Activated T-helper 2 cell treated with anti-CD3 and anti-CD28 coated beads, Interferon-gamma antibody, Interleukin-2, Interleukin-4, amounts not matched to agents 10 μg/mL and 5 μg/mL and 100 μg/mL, durations not matched to agents 14 hours and 24 hours and 36 hours (primary cell): ENCODE measurements at regions of chr15 and their contacts with region 1.

Region 1: GRCh38 chr15:63188926-63189871 is at the start of gene RAB8B:
- DNase-seq: peak; percentile 96
- H3K4me3 Mint-ChIP-seq: peak within 1 kb of the TSS; percentile 96
- H3K27ac Mint-ChIP-seq: peak within 1 kb of the TSS; percentile 90
- H3K4me1 Mint-ChIP-seq: peaks cover 40% of the 10 kb centered on the region
- H3K27me3 Mint-ChIP-seq: no peaks in the 10 kb centered on the region
- total RNA-seq, gene RAB8B: 214 TPM in 2 replicates

Region 2: DNA sequence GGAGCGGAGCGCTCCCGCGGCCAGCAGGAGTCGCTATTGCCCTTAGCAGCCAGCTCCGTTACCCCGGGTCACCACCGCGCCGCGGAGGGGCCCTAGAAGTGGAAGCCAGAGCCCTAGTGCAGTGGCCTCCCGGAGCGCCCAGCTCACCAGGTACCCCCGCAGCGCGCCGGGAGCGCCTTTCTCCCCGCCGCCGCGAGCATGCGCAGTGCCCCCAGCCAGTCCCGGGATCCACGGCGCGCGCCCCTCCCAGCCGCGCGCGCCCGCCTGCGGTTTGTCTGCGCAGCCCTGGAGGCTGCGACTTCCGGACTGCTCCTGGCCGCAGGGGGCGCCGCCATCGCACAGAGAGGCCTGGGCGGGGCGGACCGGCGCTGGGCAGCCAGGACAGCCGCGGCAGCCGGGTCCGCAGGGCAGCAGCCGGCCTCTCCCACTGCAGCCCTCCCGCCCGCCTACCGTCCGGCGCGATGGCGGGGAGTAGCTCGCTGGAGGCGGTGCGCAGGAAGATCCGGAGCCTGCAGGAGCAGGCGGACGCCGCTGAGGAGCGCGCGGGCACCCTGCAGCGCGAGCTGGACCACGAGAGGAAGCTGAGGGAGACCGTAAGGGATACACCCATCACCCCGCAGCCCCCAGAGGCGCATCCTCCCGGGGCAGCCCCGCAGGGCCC is 141.0 kb before region 1 on chr15:
- intact Hi-C with region 1: loop called (anchors 10 kb)
- DNase-seq: peak; percentile 81
- H3K4me3 Mint-ChIP-seq: peak overlapping the region; percentile 89
- H3K27ac Mint-ChIP-seq: no peak overlapping the region
- H3K4me1 Mint-ChIP-seq: peaks cover 11% of the 10 kb centered on the region
- H3K27me3 Mint-ChIP-seq: peaks cover 57% of the 10 kb centered on the region

Region 3: DNA sequence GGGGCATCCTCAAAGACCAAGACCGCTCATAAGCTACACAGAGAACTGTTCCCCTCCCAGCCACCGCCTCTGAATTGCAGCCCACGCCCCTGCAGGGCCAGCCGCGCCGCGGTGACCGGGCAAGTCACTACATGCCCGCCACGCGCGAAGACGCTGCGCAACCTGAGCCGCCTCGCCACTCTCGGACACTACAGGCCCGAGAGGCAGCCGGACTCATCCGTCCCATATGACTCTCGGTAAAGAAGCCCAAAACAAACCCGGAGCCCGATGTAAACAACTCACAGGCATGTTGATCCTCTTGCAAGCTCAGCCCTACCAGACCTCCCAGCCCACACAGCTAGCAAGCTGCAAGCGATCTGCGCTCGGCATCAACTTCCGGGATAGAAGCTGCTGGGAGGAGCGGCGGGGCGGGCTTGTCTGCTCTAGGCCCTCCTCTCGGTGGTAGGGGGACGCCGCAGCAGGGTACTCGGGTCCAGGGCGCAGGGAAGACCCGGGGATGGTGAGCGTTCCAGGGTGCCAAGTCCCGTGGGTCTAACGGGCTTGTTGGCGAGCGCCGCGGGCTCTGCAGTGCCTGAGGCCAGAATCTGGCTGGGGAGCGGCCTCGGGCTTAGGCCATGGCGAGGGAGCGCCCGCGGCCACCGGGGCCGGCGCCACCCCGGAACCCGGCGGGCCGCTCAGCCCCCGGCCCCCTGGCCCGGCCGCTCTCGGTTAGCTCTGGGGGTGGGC is 31.9 kb before region 1 on chr15 and contains the start of gene RPS27L:
- intact Hi-C with region 1: loop called (anchors 1 kb)
- DNase-seq: peak; percentile 87
- H3K4me3 Mint-ChIP-seq: peak within 1 kb of the TSS; percentile 97
- H3K27ac Mint-ChIP-seq: peak within 1 kb of the TSS; percentile 97
- H3K4me1 Mint-ChIP-seq: peaks cover 14% of the 10 kb centered on the region
- H3K27me3 Mint-ChIP-seq: no peaks in the 10 kb centered on the region
- total RNA-seq, gene RPS27L: 164 and 167 TPM in 2 replicates

Region 4: DNA sequence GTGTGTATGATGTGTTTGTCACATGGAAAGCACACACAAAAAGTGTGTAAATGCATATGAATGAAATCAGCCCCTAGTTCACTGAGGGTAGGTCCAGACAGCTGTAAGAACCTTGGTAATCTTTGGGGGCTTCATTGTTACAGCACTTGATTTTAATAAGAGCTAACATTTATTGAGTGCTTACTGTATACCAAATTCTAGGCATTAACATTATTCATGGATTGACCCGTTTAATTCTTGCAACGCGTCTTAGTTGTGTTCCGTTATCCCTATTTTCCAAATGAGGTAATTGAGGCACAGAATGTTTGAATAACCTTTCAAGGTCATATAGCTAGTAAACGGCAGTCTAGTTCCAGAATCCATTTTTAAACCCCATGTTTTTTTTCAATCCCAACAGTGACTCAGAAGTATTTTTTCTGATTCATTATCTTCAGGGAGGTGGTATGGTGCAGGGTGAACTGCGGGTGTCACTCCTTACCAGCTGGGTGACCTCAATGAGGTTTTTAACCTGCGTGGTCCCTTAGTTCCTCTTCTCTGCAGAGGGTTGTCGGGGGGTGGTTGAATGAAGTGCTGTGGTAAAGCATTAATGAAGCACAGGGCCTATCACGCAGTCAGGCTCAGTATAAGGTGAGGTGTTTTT is 14.4 kb after region 1 on chr15:
- intact Hi-C with region 1: loop called (anchors 1 kb)
- DNase-seq: no peak
- H3K4me3 Mint-ChIP-seq: no peak overlapping the region
- H3K27ac Mint-ChIP-seq: peak overlapping the region; percentile 71
- H3K4me1 Mint-ChIP-seq: peaks cover 83% of the 10 kb centered on the region
- H3K27me3 Mint-ChIP-seq: no peaks in the 10 kb centered on the region

Region 5: GRCh38 chr15:63218100-63218808 is 29.1 kb after region 1 on chr15:
- intact Hi-C with region 1: no loop called
- DNase-seq: no peak
- H3K4me3 Mint-ChIP-seq: no peak overlapping the region
- H3K27ac Mint-ChIP-seq: peak overlapping the region; percentile 67
- H3K4me1 Mint-ChIP-seq: peaks cover 62% of the 10 kb centered on the region
- H3K27me3 Mint-ChIP-seq: no peaks in the 10 kb centered on the region

Region 6: DNA sequence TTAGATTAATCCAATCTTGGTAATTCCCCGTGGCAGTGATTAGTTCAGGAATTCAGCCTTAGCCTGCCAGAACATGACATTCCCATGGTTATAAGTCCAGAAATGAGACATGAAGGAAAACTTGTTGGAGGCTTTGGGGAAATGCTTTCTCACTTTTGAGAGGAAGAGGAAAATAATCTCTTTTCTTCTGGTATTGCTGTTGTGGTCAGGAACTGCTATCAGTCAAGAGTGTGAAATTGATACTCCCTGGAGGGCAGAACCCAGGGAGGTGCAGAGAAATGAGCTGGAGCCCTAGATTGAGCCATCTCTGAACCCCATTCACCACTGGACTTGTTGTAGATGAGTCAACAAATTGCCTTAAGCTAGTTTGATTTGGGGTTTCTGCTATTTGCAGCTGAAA is 49.6 kb after region 1 on chr15:
- intact Hi-C with region 1: loop called (anchors 1 kb)
- DNase-seq: no peak
- H3K4me3 Mint-ChIP-seq: no peak overlapping the region
- H3K27ac Mint-ChIP-seq: peak overlapping the region; percentile 54
- H3K4me1 Mint-ChIP-seq: peaks cover 61% of the 10 kb centered on the region
- H3K27me3 Mint-ChIP-seq: no peaks in the 10 kb centered on the region

Region 7: DNA sequence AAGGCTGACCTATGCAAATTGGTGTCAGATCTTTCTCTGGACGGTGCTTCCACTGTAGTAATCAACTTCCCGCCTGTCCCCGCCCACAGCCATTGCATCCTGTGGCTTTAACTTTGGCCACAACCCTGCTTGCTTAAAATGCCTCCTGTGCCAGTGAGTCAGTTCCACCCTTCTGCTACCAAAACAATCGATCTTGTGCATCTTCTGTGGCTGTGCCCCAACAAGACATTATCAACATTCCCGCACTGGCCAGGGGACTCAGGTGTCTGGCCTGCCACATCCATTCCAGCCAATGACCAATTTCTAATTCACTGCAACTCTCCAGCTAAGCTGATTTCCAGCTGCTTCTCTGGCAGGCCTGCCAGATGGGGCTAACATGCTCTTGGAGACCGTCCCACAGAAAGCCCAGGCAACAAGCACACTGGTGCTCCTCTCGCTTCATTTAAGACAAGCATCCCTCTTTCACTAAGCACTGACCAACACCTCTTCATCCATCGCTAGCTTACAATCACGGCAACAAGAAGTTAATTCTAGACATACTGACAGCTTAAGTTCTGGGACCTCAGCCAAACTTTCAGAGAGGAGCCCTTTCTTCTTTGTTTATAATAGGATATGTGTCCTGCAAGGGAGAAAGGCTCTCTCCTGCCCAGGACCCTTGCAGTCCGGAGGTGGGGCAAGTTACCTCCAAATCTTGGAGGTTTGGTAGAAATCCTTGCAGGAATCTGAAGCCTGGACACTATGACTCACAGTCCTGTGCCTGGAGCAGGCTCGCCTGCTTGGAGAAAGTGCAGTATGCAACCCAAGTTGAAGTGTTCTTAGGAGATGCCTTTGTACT is 185.7 kb after region 1 on chr15:
- intact Hi-C with region 1: loop called (anchors 2 kb)
- DNase-seq: peak; percentile 27
- H3K4me3 Mint-ChIP-seq: peak overlapping the region; percentile 9
- H3K27ac Mint-ChIP-seq: peak overlapping the region; percentile 89
- H3K4me1 Mint-ChIP-seq: peaks cover 51% of the 10 kb centered on the region
- H3K27me3 Mint-ChIP-seq: peaks cover 9% of the 10 kb centered on the region

Region 8: GRCh38 chr15:63677730-63678129 is 488.5 kb after region 1 on chr15:
- intact Hi-C with region 1: loop called (anchors 10 kb)
- DNase-seq: no peak
- H3K4me3 Mint-ChIP-seq: no peak overlapping the region
- H3K27ac Mint-ChIP-seq: no peak overlapping the region
- H3K4me1 Mint-ChIP-seq: peaks cover 15% of the 10 kb centered on the region
- H3K27me3 Mint-ChIP-seq: no peaks in the 10 kb centered on the region